Activated naive CD8-positive, alpha-beta T cell treated with anti-CD3 and anti-CD28 coated beads, Interleukin-2, amount 10 ng/mL, durations not matched to agents 7 days and 5 days (primary cell): ENCODE measurements at regions of chr1 and their contacts with region 1.

Region 1: DNA sequence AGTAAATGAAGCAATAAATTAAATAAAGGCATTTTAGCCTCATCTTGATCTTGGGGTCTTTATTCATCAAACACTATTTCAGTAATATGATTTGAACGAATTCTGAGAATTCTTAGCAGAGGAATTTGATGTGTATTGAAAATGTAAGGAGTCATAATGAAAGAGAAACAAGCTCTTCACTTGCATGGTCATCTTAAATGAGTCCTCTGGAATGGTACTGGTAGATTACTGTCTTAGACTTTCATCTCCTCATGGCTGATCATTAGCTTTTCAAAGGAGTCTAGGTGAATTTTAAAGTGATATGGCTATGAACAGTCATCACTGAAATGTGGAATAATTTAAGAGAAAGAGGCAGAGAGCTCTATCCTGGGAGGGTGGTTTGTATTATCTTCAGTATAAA is 30.0 kb downstream of the PRRC2C start:
- DNase-seq: no peak
- ATAC-seq: no peak
- H3K4me3 Mint-ChIP-seq: no peak overlapping the region
- H3K27ac Mint-ChIP-seq: no peak overlapping the region
- H3K4me1 Mint-ChIP-seq: peaks cover 36% of the 10 kb centered on the region
- H3K27me3 Mint-ChIP-seq: no peaks in the 10 kb centered on the region

Region 2: GRCh38 chr1:171403371-171403770 is 111.9 kb before region 1 on chr1:
- POLR2A ChIA-PET with region 1: no interaction called
- DNase-seq: no peak
- ATAC-seq: no peak
- H3K4me3 Mint-ChIP-seq: no peak overlapping the region
- H3K27ac Mint-ChIP-seq: no peak overlapping the region
- H3K4me1 Mint-ChIP-seq: no peaks in the 10 kb centered on the region
- H3K27me3 Mint-ChIP-seq: peaks cover 18% of the 10 kb centered on the region

Region 3: DNA sequence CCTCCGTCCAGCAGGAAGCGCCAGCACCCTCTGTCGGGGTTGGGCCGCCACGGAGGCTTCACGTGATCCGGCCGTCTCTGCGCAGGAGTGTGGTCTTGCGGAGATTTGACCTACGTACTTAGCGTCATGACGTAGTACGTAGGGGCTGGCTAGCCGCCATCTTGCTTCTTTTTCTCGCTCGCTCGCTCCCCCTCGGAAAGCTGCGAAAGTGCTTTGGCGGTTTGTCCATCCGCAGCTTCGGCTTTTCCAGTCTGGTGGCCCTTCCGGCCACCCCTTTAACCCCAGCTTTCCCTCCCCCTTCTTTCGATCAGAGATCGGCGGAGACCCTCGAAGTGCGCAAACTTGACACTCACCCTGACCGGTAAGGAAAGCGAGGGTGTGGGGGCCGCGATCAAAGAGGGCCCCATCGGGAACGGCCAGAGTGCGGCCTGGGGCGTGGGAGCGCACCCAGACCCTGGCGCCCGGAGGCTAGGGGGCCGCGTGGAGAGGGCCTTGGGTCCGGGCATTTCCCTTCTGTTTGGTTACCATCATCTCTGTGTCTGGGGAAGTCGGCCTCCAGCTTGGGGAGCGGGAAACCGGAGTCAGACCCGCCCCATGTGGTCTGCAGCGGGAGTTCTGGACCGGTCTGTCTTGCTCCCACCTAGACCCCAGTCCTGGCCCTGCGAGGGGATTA is 29.8 kb before region 1 on chr1 and contains the start of gene PRRC2C:
- POLR2A ChIA-PET with region 1: interaction called, 13 read pairs
- DNase-seq: peak; percentile 87
- ATAC-seq: peak; percentile 84
- H3K4me3 Mint-ChIP-seq: peak within 1 kb of the TSS; percentile 97
- H3K27ac Mint-ChIP-seq: peak within 1 kb of the TSS; percentile 99
- H3K4me1 Mint-ChIP-seq: peaks cover 32% of the 10 kb centered on the region
- H3K27me3 Mint-ChIP-seq: no peaks in the 10 kb centered on the region
- total RNA-seq, gene PRRC2C: 246 to 258 TPM